Activated CD8-positive, alpha-beta T cell treated with anti-CD3 and anti-CD28 coated beads for 36 hours (primary cell): ENCODE measurements at regions of chr3 and their contacts with region 1.

Region 1: DNA sequence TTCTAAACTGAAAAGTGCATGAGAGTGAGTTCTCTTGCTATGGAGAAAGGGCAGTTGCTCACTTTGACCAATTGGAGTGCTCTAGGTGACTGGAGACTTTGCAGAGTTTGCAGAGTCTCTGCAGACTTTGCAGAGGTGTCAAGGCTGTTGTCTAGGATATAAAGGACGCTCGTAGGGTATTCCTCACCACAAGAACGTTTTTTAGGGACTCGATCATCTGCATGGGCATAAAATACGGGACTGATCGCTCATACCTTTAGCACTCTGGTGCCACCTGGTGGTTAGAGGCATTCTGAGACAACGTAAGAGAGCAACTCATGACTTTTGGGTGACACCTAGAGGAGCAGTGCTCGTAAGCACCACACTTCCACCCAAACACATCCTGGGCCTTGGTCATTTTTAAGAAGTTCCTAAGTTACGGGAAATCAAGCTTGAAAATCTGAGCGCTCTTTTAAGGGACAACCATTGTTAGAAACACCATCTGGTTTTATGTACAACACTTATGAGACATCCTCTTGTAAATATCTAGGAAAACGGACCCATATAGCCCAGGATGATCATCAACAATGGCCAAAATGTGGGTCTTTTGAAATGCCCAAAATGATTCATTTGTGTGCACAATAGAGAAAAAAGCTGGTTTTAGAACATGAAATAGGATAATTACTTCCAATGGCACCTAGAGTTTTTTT is 51.6 kb upstream of the XCR1 start:
- DNase-seq: peak; percentile 97
- ATAC-seq: peak; percentile 99
- H3K4me3 Mint-ChIP-seq: no peak overlapping the region
- H3K27ac Mint-ChIP-seq: no peak overlapping the region
- H3K4me1 Mint-ChIP-seq: peaks cover 10% of the 10 kb centered on the region
- H3K27me3 Mint-ChIP-seq: peaks cover 8% of the 10 kb centered on the region
- CTCF ChIP-seq: peak; percentile 99

Region 2: GRCh38 chr3:45760878-45761711 is 317.8 kb before region 1 on chr3:
- CTCF ChIA-PET with region 1: interaction called, 14 read pairs
- POLR2A ChIA-PET with region 1: no interaction called
- intact Hi-C with region 1: loop called (anchors 2 kb)
- DNase-seq: peak; percentile 60
- ATAC-seq: peak; percentile 77
- H3K4me3 Mint-ChIP-seq: no peak overlapping the region
- H3K27ac Mint-ChIP-seq: no peak overlapping the region
- H3K4me1 Mint-ChIP-seq: peaks cover 2% of the 10 kb centered on the region
- H3K27me3 Mint-ChIP-seq: peaks cover 3% of the 10 kb centered on the region
- CTCF ChIP-seq: peak; percentile 77

Region 3: GRCh38 chr3:45938864-45939263 is 140.0 kb before region 1 on chr3:
- CTCF ChIA-PET with region 1: interaction called, 656 read pairs
- POLR2A ChIA-PET with region 1: interaction called, 22 read pairs
- intact Hi-C with region 1: loop called (anchors 1 kb)
- DNase-seq: peak; percentile 97
- ATAC-seq: peak; percentile 65
- H3K4me3 Mint-ChIP-seq: no peak overlapping the region
- H3K27ac Mint-ChIP-seq: no peak overlapping the region
- H3K4me1 Mint-ChIP-seq: peaks cover 34% of the 10 kb centered on the region
- H3K27me3 Mint-ChIP-seq: peaks cover 2% of the 10 kb centered on the region
- CTCF ChIP-seq: peak; percentile 73

Region 4: GRCh38 chr3:45978006-45978761 is 100.7 kb before region 1 on chr3:
- CTCF ChIA-PET with region 1: interaction called, 51 read pairs
- POLR2A ChIA-PET with region 1: no interaction called
- intact Hi-C with region 1: no loop called
- DNase-seq: peak; percentile 90
- ATAC-seq: peak; percentile 17
- H3K4me3 Mint-ChIP-seq: peak overlapping the region; percentile 66
- H3K27ac Mint-ChIP-seq: peak overlapping the region; percentile 96
- H3K4me1 Mint-ChIP-seq: peaks cover 88% of the 10 kb centered on the region
- H3K27me3 Mint-ChIP-seq: no peaks in the 10 kb centered on the region
- CTCF ChIP-seq: no peak

Region 5: GRCh38 chr3:46065294-46065721 is 13.5 kb before region 1 on chr3:
- CTCF ChIA-PET with region 1: interaction called, 103 read pairs
- POLR2A ChIA-PET with region 1: no interaction called
- intact Hi-C with region 1: no loop called
- DNase-seq: peak; percentile 95
- ATAC-seq: peak; percentile 94
- H3K4me3 Mint-ChIP-seq: peak overlapping the region; percentile 31
- H3K27ac Mint-ChIP-seq: peak overlapping the region; percentile 66
- H3K4me1 Mint-ChIP-seq: peaks cover 55% of the 10 kb centered on the region
- H3K27me3 Mint-ChIP-seq: peaks cover 27% of the 10 kb centered on the region
- CTCF ChIP-seq: no peak

Region 6: GRCh38 chr3:46193436-46193835 is 114.6 kb after region 1 on chr3:
- CTCF ChIA-PET with region 1: interaction called, 11 read pairs
- POLR2A ChIA-PET with region 1: no interaction called
- intact Hi-C with region 1: no loop called
- DNase-seq: no peak
- ATAC-seq: no peak
- H3K4me3 Mint-ChIP-seq: no peak overlapping the region
- H3K27ac Mint-ChIP-seq: no peak overlapping the region
- H3K4me1 Mint-ChIP-seq: peaks cover 2% of the 10 kb centered on the region
- H3K27me3 Mint-ChIP-seq: peaks cover 4% of the 10 kb centered on the region
- CTCF ChIP-seq: no peak